Heart right ventricle (tissue), 16 donors: ENCODE measurements at regions of chr15 and their contacts with region 1.

Region 1: DNA sequence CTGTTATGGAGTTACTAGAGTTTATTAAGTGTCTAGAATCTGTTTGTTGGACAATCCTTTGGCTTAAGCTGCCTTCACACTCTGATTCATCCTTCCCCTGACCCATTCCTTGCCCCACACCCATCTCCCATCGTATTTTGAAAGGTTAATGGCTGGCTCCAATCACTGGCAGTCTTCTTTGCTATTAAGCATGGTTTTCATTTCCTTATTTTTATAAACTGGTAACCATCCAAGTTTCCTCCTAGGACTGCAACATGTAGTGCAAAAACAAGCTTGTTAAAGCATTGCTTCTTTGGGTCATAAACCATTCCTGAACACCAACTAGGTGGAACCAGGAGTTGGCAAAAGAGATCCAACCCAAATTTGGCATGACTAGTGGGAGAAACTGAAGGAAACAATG is 148.4 kb downstream of the DTWD1 start:
- DNase-seq: no peak
- ATAC-seq: no peak
- H3K4me3 ChIP-seq: no peak overlapping the region
- H3K27ac ChIP-seq: no peak overlapping the region
- H3K4me1 ChIP-seq: no peaks in the 10 kb centered on the region
- H3K27me3 ChIP-seq: no peaks in the 10 kb centered on the region
- CTCF ChIP-seq: no peak

Region 2: GRCh38 chr15:49706805-49707204 is 62.4 kb before region 1 on chr15:
- intact Hi-C with region 1: loop called in 1 of 10 experiments (anchors 10 kb)
- DNase-seq: no peak
- ATAC-seq: peak in 1 of 8 donors; percentile 45
- H3K4me3 ChIP-seq: no peak overlapping the region
- H3K27ac ChIP-seq: no peak overlapping the region
- H3K4me1 ChIP-seq: peaks cover 0 to 8% (median 0%) of the 10 kb centered on the region in 9 donors
- H3K27me3 ChIP-seq: no peaks in the 10 kb centered on the region
- CTCF ChIP-seq: no peak

Region 3: GRCh38 chr15:49793943-49794342 is 24.7 kb after region 1 on chr15:
- intact Hi-C with region 1: no loop called
- DNase-seq: no peak
- ATAC-seq: no peak
- H3K4me3 ChIP-seq: no peak overlapping the region
- H3K27ac ChIP-seq: no peak overlapping the region
- H3K4me1 ChIP-seq: no peaks in the 10 kb centered on the region
- H3K27me3 ChIP-seq: no peaks in the 10 kb centered on the region
- CTCF ChIP-seq: no peak